ENCODE measurements at regions of chr6 and their contacts with region 1.

Region 1: GRCh38 chr6:134161036-134161435 is 108.6 kb upstream of the SLC2A12 start:
- DNase-seq: peak; percentile 46
- H3K4me3 ChIP-seq: no peak overlapping the region
- H3K27me3 ChIP-seq: no peaks in the 10 kb centered on the region
- CTCF ChIP-seq: no peak

Region 2: GRCh38 chr6:134145786-134146185 is 15.2 kb before region 1 on chr6:
- CTCF ChIA-PET with region 1: interaction called, 22 read pairs
- POLR2A ChIA-PET with region 1: no interaction called
- DNase-seq: peak; percentile 51
- H3K4me3 ChIP-seq: no peak overlapping the region
- H3K27me3 ChIP-seq: no peaks in the 10 kb centered on the region
- CTCF ChIP-seq: no peak

Region 3: DNA sequence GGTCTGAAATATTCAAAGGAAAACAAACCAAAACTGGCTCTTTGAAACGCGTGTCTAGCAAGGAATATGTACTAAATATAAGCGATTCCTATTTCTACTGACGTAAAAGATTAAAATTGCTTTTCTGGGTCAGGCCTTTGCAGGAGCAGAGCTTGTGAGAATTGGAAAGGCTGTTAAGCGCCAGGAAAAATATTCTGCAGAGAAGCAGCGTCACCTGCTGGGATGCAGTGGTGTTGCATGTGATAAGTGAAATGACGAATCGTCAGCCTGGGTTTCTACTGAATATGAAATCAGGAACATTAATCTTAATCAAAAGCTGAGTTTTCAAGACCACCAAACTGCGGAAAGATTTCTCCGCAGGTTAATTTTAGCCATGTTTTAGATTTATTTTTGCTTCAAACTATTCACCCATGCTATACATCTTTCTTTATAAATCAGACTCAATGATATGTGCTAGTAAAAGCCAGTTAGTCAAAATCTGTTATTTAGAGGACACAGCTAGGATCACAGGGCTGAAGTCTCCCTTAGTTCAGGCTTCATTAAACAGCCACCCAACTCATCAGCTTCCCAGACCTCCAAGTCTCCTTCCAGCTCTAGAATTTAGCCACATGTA is 721.5 kb after region 1 on chr6:
- CTCF ChIA-PET with region 1: interaction called, 14 read pairs
- POLR2A ChIA-PET with region 1: no interaction called
- DNase-seq: no peak
- H3K4me3 ChIP-seq: no peak overlapping the region
- H3K27me3 ChIP-seq: no peaks in the 10 kb centered on the region
- CTCF ChIP-seq: peak; percentile 83

Region 4: GRCh38 chr6:134938896-134939295 is 777.9 kb after region 1 on chr6:
- CTCF ChIA-PET with region 1: interaction called, 63 read pairs
- POLR2A ChIA-PET with region 1: no interaction called
- DNase-seq: no peak
- H3K4me3 ChIP-seq: no peak overlapping the region
- H3K27me3 ChIP-seq: no peaks in the 10 kb centered on the region
- CTCF ChIP-seq: no peak